Activated CD8-positive, alpha-beta T cell treated with anti-CD3 and anti-CD28 coated beads, Interleukin-2, amount 10 ng/mL, durations not matched to agents 7 days and 5 days (primary cell): ENCODE measurements at regions of chr20 and their contacts with region 1.

Region 1: DNA sequence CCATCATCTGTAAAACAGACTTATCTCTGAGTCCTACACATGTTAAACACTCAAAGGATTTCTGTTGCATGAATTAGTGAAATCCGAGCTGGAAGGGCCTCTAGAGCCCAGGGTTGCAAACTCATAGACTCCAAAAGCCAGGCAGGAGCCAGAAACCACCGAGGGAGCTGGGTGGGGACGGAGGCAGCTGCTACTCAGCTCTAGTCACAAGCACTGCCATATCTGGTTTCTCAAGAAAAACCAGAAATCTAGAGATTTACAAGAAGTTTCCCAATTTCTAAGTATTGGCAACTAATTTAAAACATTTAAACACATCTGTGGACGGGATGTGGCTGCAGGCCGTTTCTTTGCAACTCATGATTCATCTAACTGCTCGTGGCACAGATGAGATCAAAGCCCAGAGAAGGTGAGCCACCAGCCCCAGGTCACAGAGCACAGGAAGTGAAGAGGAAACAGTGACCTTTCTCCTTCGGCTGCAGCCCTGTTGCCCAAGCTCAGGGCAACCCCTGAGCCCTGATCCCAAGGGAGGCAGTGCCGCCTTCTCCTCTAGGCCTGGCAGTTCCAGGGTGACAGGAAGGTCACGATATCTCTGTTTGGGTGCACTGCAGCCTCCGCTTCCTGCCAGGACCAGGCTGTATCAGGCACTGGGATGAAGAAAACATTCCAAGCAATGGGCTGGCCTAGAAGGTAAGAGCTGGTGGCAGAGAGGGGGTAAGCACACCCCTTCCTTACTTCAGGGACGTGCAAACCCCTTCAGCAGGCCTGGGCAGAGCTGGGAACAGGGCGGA is 26.4 kb upstream of the PTGIS start:
- DNase-seq: peak; percentile 93
- ATAC-seq: peak; percentile 74
- H3K4me3 Mint-ChIP-seq: peak overlapping the region; percentile 81
- H3K27ac Mint-ChIP-seq: peak overlapping the region; percentile 96
- H3K4me1 Mint-ChIP-seq: peaks cover 87% of the 10 kb centered on the region
- H3K27me3 Mint-ChIP-seq: no peaks in the 10 kb centered on the region

Region 2: GRCh38 chr20:49199729-49200293 is 394.5 kb before region 1 on chr20:
- CTCF ChIA-PET with region 1: no interaction called
- POLR2A ChIA-PET with region 1: no interaction called
- DNase-seq: no peak
- ATAC-seq: no peak
- H3K4me3 Mint-ChIP-seq: no peak overlapping the region
- H3K27ac Mint-ChIP-seq: no peak overlapping the region
- H3K4me1 Mint-ChIP-seq: no peaks in the 10 kb centered on the region
- H3K27me3 Mint-ChIP-seq: no peaks in the 10 kb centered on the region

Region 3: GRCh38 chr20:49446808-49447207 is 147.5 kb before region 1 on chr20:
- CTCF ChIA-PET with region 1: no interaction called
- POLR2A ChIA-PET with region 1: no interaction called
- DNase-seq: no peak
- ATAC-seq: no peak
- H3K4me3 Mint-ChIP-seq: no peak overlapping the region
- H3K27ac Mint-ChIP-seq: no peak overlapping the region
- H3K4me1 Mint-ChIP-seq: no peaks in the 10 kb centered on the region
- H3K27me3 Mint-ChIP-seq: peaks cover 27% of the 10 kb centered on the region

Region 4: DNA sequence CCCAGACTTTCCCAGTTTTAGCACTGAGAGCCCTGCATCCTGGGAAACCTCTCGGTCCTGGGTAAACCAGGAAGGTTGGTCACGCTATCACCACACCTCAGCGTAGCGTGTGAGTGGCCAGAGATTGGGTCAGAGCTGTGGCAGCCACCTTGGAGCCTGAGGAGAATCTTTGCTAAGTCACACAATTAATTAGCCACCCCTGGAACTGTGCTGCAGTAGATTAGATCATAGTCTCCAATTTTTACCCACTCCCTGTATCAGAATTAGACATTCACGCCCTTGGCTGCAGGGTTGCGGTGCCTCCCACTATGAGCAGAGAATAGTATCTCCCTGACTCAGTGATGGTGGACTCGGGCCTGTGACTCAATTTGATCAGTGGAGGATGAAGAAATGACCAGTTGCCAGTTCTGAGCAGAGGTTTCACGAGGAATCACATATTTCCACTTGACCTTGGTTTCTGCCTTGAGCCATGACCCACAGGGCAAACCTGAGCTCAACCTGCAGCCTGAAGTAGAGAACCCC is 20.4 kb before region 1 on chr20:
- CTCF ChIA-PET with region 1: interaction called, 6 read pairs
- POLR2A ChIA-PET with region 1: interaction called, 38 read pairs
- DNase-seq: no peak
- ATAC-seq: no peak
- H3K4me3 Mint-ChIP-seq: no peak overlapping the region
- H3K27ac Mint-ChIP-seq: peak overlapping the region; percentile 90
- H3K4me1 Mint-ChIP-seq: peaks cover 71% of the 10 kb centered on the region
- H3K27me3 Mint-ChIP-seq: peaks cover 20% of the 10 kb centered on the region

Region 5: GRCh38 chr20:49583669-49584417 is 10.5 kb before region 1 on chr20:
- CTCF ChIA-PET with region 1: interaction called, 3 read pairs
- POLR2A ChIA-PET with region 1: interaction called, 38 read pairs
- DNase-seq: no peak
- ATAC-seq: no peak
- H3K4me3 Mint-ChIP-seq: no peak overlapping the region
- H3K27ac Mint-ChIP-seq: no peak overlapping the region
- H3K4me1 Mint-ChIP-seq: peaks cover 40% of the 10 kb centered on the region
- H3K27me3 Mint-ChIP-seq: peaks cover 2% of the 10 kb centered on the region

Region 6: DNA sequence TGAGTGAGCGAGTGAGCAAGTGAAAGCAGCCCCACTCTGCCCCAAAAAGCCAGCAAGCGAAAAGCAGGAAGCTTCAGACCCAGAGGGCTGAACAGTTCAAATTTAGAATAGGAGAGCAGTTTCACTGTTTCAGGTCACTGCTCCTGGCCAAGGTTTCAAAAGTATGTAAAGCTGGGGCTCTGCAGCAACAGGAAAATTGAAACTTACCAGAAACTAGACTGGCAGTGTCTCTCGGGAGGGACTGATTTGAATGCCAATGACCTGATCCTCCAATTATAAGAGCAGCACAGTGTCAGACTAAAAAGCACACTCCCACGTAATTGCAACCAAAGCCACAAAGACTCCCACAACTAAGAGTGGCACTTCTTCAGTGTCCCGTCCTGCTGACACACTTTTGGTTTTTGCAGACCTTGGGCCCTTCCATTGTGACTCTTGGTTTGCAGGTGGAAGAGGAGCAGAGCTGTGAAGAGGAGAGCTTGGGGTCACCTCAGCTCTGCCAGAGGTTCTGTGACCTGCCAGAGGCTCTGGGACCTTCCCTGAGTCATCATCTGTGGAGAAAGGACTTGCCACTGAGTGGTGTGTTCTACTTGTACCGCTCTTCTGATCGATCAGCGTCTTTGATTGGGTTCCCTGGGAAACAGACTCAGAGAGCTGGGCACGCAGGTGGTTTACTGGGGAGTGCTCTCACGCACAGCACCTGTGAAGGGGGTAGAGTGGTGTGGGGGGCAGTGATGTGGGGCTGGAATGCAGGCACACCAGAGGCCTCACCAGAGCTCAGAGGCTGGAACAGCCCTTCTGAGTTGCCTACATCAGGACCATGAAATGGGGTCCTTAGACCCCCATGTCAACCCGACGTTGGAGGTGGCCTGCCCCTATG is 26.3 kb after region 1 on chr20:
- CTCF ChIA-PET with region 1: no interaction called
- POLR2A ChIA-PET with region 1: no interaction called
- DNase-seq: peak; percentile 43
- ATAC-seq: peak; percentile 81
- H3K4me3 Mint-ChIP-seq: no peak overlapping the region
- H3K27ac Mint-ChIP-seq: peak overlapping the region; percentile 18
- H3K4me1 Mint-ChIP-seq: peaks cover 3% of the 10 kb centered on the region
- H3K27me3 Mint-ChIP-seq: peaks cover 6% of the 10 kb centered on the region

Region 7: GRCh38 chr20:49657118-49657901 is 63.0 kb after region 1 on chr20:
- CTCF ChIA-PET with region 1: no interaction called
- POLR2A ChIA-PET with region 1: no interaction called
- DNase-seq: no peak
- ATAC-seq: no peak
- H3K4me3 Mint-ChIP-seq: no peak overlapping the region
- H3K27ac Mint-ChIP-seq: no peak overlapping the region
- H3K4me1 Mint-ChIP-seq: peaks cover 35% of the 10 kb centered on the region
- H3K27me3 Mint-ChIP-seq: no peaks in the 10 kb centered on the region